Posterior vena cava (tissue), 2 donors: ENCODE measurements at regions of chr4 and their contacts with region 1.

Region 1: GRCh38 chr4:72326692-72327632 is 242.1 kb downstream of the ADAMTS3 start:
- DNase-seq: no peak

Region 2: DNA sequence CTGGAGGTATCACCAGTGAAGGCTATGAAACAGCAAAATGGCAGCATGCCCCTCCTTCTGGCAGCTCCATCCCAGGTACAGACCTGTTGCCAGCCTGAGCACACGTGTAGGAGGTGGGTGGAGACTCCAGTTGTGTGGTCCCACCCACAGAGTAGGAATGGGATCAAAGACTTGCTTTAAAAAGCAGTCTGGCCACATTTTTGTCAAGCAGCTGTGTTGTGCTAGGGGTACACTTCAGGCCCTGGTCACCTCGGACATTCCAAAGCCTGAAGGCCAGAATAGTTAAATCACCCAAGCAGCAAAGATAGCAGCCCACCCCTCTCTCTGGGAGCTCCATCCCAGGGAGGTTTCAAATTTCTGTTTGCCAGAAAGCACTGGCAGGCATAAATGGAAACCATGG is 1755.2 kb before region 1 on chr4:
- intact Hi-C with region 1: loop called in 1 of 2 experiments (anchors 5 kb)
- DNase-seq: no peak

Region 3: GRCh38 chr4:72275381-72275780 is 51.6 kb before region 1 on chr4:
- intact Hi-C with region 1: no loop called
- DNase-seq: no peak

Region 4: DNA sequence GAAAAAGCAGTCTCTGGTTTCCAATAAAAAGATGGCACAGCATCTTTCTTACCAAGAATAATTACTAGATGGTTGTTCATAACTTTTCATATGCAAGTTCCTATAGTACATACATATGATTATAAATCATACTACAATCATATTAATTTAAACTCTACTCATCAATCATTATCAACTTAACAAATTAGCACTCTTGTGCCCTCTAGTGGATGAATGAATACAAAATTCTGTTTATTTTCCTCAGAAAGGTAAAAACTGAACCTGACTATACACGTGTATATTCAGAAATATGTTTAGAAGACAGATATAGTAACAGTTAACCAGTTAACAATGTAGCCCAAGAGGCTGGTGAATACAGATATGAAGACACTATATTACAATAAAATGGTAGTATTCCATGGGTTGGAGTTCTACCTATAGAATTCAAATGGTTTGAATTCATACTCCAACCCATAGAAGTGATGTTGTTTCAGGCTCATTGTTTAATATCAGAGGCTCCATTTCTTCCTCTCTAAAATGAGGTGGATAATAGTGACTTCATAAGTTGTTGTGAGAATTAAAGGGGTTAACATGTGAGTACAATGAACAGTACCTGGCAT is 142.0 kb after region 1 on chr4:
- intact Hi-C with region 1: loop called in 1 of 2 experiments (anchors 10 kb)
- DNase-seq: no peak

Region 5: GRCh38 chr4:72712997-72713396 is 386.0 kb after region 1 on chr4:
- intact Hi-C with region 1: no loop called
- DNase-seq: no peak